CD4-positive, alpha-beta memory T cell (primary cell): ENCODE measurements at regions of chr12 and their contacts with region 1.

Region 1: DNA sequence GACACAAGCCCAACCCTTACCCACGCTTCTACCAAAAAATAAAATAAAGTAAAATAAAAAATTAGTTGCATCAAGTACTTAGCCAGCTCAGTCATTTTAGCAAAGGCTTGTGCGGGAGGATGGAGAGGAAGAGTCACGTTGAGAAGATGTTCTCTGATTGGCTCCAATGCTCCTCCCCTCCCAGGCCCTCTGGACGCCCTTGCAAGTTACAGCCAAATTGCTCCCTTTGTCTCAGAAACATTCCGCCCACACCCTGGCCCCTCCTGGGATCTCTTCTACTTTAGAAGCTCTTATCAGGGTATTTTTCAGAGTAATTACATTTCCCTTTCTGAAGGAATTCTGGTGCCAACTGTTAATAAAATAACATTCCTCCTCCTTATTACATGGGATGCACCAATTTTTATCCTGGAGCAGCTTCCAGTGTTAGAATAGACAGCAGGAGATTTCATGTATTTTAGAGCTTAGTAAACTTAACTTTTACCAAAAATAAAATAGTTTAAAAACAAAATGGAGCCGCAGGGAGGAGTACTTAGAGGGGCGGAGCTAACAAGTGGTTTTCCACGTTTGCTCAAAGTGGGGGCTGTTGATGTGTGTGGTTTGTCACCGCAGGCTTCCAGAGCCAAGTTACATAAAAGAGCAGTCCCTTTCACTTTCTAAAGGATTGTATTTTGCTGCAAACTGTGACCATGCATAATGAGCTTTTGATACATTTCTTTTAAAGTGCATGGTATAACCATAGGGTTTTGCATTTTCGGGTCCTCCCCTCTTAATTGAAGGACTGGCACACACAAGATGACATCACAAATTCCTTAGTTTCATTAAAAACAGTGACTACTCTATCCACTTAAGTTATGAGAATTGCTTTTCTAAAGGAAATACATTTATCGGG is 71.7 kb upstream of the RAP1B start:
- DNase-seq: peak; percentile 64 to 78 (median 76)
- H3K4me3 ChIP-seq: no peak overlapping the region
- H3K4me3 Mint-ChIP-seq: peak overlapping the region; percentile 48 to 83 (median 66)
- H3K27ac ChIP-seq: no peak overlapping the region
- H3K27ac Mint-ChIP-seq: peak overlapping the region; percentile 10 to 91 (median 63)
- H3K4me1 ChIP-seq: peaks cover 35% of the 10 kb centered on the region
- H3K4me1 Mint-ChIP-seq: peaks cover 26 to 56% (median 40%) of the 10 kb centered on the region in 4 donors
- H3K27me3 ChIP-seq: no peaks in the 10 kb centered on the region
- H3K27me3 Mint-ChIP-seq: no peaks in the 10 kb centered on the region

Region 2: DNA sequence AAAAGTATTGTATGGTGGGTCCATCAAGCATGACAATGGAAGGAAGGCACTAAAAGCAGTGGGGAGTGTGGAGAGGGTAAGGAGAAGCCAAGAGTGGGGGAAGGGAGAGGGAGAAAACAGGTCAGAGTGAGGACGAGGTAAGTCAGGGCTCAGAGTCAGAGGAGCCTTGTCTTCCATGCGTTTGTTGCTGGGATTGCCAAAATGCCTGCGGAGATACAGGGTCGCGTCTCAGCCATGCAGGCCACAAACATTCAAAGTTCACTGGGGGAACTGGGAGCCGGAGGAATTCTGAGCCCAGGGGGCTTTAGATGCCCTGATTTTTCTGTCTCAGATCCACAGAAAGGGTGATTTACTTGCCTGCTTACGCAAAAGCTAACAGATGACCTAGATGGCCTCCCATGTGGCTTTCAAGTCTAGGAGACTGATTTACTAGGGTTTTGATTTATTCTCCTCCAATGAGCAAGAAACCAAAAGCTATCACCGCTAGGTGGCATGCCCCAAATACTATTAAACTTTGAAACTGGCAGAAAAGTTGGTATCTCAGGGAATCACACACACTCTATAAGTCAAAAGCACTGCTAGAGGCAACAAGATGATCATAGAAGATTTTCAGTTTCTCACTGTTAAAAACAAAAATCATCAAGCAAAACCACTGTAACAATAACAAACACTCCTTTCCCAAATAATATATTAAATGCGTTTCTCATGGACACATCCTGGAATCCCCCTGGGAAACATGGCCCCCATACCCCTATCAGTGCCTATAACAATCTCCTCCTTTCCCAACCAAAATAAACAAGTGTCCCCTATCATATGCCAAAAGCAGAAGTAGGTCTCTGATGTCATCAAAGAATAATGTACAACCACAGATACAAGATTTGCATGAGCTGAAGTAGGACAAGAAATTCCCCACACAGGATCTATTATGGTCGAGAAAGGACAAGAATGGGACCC is 180.2 kb before region 1 on chr12:
- CTCF ChIA-PET with region 1: interaction called, 11 read pairs
- POLR2A ChIA-PET with region 1: no interaction called
- intact Hi-C with region 1: no loop called
- DNase-seq: peak; percentile 71 to 76 (median 74)
- H3K4me3 ChIP-seq: no peak overlapping the region
- H3K4me3 Mint-ChIP-seq: no peak overlapping the region
- H3K27ac ChIP-seq: no peak overlapping the region
- H3K27ac Mint-ChIP-seq: peak overlapping the region; percentile 2 to 80 (median 65)
- H3K4me1 ChIP-seq: peaks cover 21% of the 10 kb centered on the region
- H3K4me1 Mint-ChIP-seq: peaks cover 18 to 35% (median 24%) of the 10 kb centered on the region in 4 donors
- H3K27me3 ChIP-seq: no peaks in the 10 kb centered on the region
- H3K27me3 Mint-ChIP-seq: no peaks in the 10 kb centered on the region

Region 3: DNA sequence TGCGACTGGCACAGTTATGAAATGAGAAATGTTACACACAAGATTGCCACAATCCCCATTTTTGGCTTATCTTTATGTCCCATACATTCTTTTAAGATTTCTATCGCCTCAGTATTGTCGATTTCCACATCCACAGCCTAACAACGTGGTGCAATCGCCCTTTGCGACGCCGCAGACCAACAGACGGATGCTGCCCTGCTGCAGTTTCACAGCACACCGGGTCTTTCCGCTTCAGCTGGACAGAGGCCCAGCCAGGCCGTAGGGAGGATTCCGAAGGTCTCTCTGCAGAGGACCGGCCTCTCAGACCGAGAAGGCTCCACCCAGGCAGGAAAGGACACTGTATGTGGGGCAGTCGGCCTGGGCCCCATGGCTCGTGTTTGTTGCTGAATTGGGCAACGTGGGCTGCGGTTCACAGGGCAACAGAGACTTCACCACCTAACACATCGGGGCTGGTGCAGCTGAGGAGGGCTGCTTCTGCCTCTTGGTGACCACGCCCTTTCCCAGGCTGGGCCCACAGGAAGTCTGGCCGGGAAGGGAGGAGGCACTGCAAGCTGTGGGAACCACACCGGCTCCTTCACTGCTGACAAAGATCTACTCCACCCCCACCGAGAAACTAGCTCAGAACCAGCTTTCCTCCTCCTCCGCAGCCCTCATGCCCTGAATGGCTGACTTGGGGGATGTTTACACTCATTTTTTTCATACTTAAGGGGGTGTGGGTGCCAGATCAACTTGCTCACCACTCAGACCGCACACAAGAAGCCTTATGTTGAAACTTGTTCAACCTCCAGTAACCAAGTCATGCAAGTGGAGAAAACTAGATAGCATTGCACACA is 173.9 kb before region 1 on chr12:
- CTCF ChIA-PET with region 1: interaction called, 11 read pairs
- POLR2A ChIA-PET with region 1: interaction called, 8 read pairs
- intact Hi-C with region 1: loop called (anchors 5 kb)
- DNase-seq: peak; percentile 82 to 91 (median 88)
- H3K4me3 ChIP-seq: peak overlapping the region in 1 of 2 donors; percentile 51
- H3K4me3 Mint-ChIP-seq: peak overlapping the region; percentile 77 to 92 (median 84)
- H3K27ac ChIP-seq: peak overlapping the region; percentile 76
- H3K27ac Mint-ChIP-seq: peak overlapping the region; percentile 91 to 97 (median 96)
- H3K4me1 ChIP-seq: peaks cover 59% of the 10 kb centered on the region
- H3K4me1 Mint-ChIP-seq: peaks cover 54 to 81% (median 60%) of the 10 kb centered on the region in 4 donors
- H3K27me3 ChIP-seq: no peaks in the 10 kb centered on the region
- H3K27me3 Mint-ChIP-seq: no peaks in the 10 kb centered on the region

Region 4: GRCh38 chr12:68565375-68565903 is 26.5 kb after region 1 on chr12:
- CTCF ChIA-PET with region 1: interaction called, 3 read pairs
- POLR2A ChIA-PET with region 1: no interaction called
- intact Hi-C with region 1: loop called (anchors 2 kb)
- DNase-seq: peak in 3 of 5 donors; percentile 12 to 43 (median 24)
- H3K4me3 ChIP-seq: no peak overlapping the region
- H3K4me3 Mint-ChIP-seq: peak overlapping the region in 1 of 8 donors; percentile 63
- H3K27ac ChIP-seq: no peak overlapping the region
- H3K27ac Mint-ChIP-seq: peak overlapping the region in 3 of 7 donors; percentile 19 to 57 (median 46)
- H3K4me1 ChIP-seq: peaks cover 11% of the 10 kb centered on the region
- H3K4me1 Mint-ChIP-seq: peaks cover 11 to 23% (median 18%) of the 10 kb centered on the region in 4 donors
- H3K27me3 ChIP-seq: no peaks in the 10 kb centered on the region
- H3K27me3 Mint-ChIP-seq: no peaks in the 10 kb centered on the region

Region 5: DNA sequence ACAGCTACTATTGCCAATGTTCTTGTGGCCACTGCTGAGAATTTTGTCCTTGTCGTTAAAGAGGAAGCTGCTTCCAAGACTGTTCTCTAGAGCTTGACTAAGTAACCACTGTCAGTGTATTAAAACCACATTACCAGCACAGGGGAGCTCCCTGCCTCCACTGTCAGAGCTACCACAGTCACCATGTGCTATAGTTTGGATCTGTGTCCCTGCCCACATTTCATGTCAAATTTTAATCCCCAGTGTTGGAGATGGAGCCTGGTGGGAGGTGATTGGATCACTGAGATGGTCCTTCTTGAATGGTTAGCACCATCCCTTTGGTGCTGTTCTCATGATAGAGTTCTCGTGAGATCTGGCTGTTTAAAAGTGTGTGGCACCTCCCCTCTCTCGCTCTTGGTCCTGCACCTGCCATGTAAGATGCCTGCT is 48.5 kb after region 1 on chr12:
- CTCF ChIA-PET with region 1: no interaction called
- POLR2A ChIA-PET with region 1: no interaction called
- intact Hi-C with region 1: loop called (anchors 5 kb)
- DNase-seq: peak in 4 of 5 donors; percentile 36 to 50 (median 48)
- H3K4me3 ChIP-seq: no peak overlapping the region
- H3K4me3 Mint-ChIP-seq: peak overlapping the region in 5 of 8 donors; percentile 17 to 44 (median 22)
- H3K27ac ChIP-seq: no peak overlapping the region
- H3K27ac Mint-ChIP-seq: peak overlapping the region in 5 of 7 donors; percentile 15 to 80 (median 59)
- H3K4me1 ChIP-seq: peaks cover 37% of the 10 kb centered on the region
- H3K4me1 Mint-ChIP-seq: peaks cover 29 to 43% (median 37%) of the 10 kb centered on the region in 4 donors
- H3K27me3 ChIP-seq: no peaks in the 10 kb centered on the region
- H3K27me3 Mint-ChIP-seq: no peaks in the 10 kb centered on the region